ENCODE measurements at regions of chr3 and their contacts with region 1.

Region 1: GRCh38 chr3:192467230-192468140 is 259.9 kb downstream of the FGF12 start:
- DNase-seq: peak; percentile 51
- ATAC-seq: peak; percentile 96
- H3K4me3 ChIP-seq: no peak overlapping the region
- H3K27ac ChIP-seq: no peak overlapping the region
- H3K4me1 ChIP-seq: peaks cover 5% of the 10 kb centered on the region; the same call in 1 of the 2 replicates
- H3K27me3 ChIP-seq: no peaks in the 10 kb centered on the region; a peak in 1 of 5 replicates
- CTCF ChIP-seq: peak; percentile 84
- EP300 ChIP-seq: no peak
- POLR2A ChIP-seq: no peak
- RAD21 ChIP-seq: peak; percentile 44; the same call in 1 of the 2 replicates

Region 2: GRCh38 chr3:192802957-192803899 is 335.7 kb after region 1 on chr3:
- CTCF ChIA-PET with region 1: interaction called, 15 read pairs
- POLR2A ChIA-PET with region 1: no interaction called
- in situ Hi-C with region 1: loop called (anchors 5 kb)
- intact Hi-C with region 1: no loop called
- DNase-seq: peak; percentile 27
- ATAC-seq: peak; percentile 76
- H3K4me3 ChIP-seq: no peak overlapping the region
- H3K27ac ChIP-seq: no peak overlapping the region
- H3K4me1 ChIP-seq: no peaks in the 10 kb centered on the region
- H3K27me3 ChIP-seq: no peaks in the 10 kb centered on the region
- CTCF ChIP-seq: peak; percentile 62
- EP300 ChIP-seq: no peak
- POLR2A ChIP-seq: no peak
- RAD21 ChIP-seq: peak; percentile 28; the same call in 1 of the 2 replicates

Region 3: DNA sequence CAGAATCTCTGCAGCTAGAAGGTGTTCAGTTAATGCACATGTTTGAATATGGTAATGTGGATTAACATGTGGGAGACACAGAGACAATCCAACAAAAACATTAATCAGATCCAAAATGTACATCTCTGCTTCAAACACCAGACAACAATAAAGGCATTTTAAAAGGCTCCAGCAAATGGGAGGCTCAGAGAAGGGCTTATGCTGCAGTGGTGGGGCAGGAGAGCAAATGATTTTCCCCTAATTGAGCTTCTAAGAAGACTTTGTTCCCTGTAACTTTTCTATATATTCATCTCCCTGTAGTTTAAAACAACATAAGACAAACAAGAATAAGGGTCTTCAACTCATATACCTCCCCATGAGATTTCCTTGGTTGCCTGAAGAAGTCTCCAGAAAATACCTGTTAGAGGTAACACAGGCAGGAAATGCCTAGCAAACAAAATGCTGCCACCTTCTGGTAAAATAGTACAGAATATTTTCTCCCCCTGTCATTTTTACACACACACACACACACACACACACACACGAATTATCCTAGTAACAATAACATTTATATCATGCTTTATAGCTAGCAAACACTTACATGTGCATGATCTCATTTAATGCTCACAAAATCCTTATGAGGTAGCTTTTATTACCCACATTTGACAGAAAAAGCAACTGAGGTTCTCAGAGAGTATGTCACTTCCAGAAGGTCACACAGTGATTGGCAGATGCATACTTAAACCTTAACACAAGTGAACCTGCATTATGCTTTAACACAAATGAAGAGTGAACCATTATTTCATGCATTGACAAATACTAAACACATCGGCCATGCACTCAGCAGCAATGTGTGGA is 573.6 kb after region 1 on chr3:
- CTCF ChIA-PET with region 1: no interaction called
- POLR2A ChIA-PET with region 1: no interaction called
- in situ Hi-C with region 1: loop called (anchors 25 kb)
- intact Hi-C with region 1: loop called (anchors 10 kb)
- DNase-seq: peak; percentile 24
- ATAC-seq: peak; percentile 60; the same call in 2 of the 3 replicates
- H3K4me3 ChIP-seq: no peak overlapping the region
- H3K27ac ChIP-seq: no peak overlapping the region
- H3K4me1 ChIP-seq: no peaks in the 10 kb centered on the region
- H3K27me3 ChIP-seq: no peaks in the 10 kb centered on the region
- CTCF ChIP-seq: peak; percentile 58
- EP300 ChIP-seq: no peak
- POLR2A ChIP-seq: no peak
- RAD21 ChIP-seq: no peak

Measured in HepG2 (cell line).